Activated CD4-positive, alpha-beta T cell treated with anti-CD3 and anti-CD28 coated beads, Interleukin-2, amount 10 ng/mL, durations not matched to agents 24 days and 14 days (primary cell): ENCODE measurements at regions of chr4 and their contacts with region 1.

Region 1: GRCh38 chr4:158253350-158253980 is 43.2 kb downstream of the TMEM144 start:
- DNase-seq: peak; percentile 86
- H3K4me3 Mint-ChIP-seq: no peak overlapping the region
- H3K27ac Mint-ChIP-seq: no peak overlapping the region
- H3K4me1 Mint-ChIP-seq: no peaks in the 10 kb centered on the region
- H3K27me3 Mint-ChIP-seq: peaks cover 2% of the 10 kb centered on the region

Region 2: DNA sequence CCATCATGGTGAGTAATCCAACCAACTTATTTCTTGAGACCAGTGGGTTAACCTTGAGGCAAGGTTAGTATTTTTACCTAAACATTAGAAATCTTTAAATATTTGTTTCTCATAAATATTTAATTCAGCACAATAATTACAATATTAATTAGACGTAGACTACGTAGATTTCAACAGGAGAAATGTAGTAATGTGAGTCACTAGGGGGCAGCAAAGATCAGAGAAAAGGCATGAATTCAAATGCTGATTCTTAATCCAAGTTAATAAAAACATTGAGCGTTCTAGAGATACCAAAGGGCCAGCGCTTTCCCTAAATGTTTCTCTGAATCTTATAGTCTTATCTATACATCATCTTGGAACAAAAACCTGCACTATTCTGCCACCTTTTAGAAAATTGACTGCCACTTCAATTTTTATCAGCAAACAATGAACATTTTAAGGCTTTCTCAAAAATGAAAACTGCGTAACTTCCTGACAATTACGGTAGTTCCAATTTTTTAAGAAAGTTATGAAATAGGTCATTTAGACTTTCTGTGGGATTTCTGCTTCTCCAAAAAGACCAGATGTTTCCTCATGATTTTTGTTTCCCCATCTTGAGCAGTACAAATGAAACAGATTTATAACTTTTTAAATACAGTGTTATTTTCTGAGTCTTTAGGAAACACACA is 261.3 kb before region 1 on chr4:
- intact Hi-C with region 1: loop called (anchors 2 kb)
- DNase-seq: peak; percentile 70
- H3K4me3 Mint-ChIP-seq: no peak overlapping the region
- H3K27ac Mint-ChIP-seq: no peak overlapping the region
- H3K4me1 Mint-ChIP-seq: no peaks in the 10 kb centered on the region
- H3K27me3 Mint-ChIP-seq: no peaks in the 10 kb centered on the region

Region 3: DNA sequence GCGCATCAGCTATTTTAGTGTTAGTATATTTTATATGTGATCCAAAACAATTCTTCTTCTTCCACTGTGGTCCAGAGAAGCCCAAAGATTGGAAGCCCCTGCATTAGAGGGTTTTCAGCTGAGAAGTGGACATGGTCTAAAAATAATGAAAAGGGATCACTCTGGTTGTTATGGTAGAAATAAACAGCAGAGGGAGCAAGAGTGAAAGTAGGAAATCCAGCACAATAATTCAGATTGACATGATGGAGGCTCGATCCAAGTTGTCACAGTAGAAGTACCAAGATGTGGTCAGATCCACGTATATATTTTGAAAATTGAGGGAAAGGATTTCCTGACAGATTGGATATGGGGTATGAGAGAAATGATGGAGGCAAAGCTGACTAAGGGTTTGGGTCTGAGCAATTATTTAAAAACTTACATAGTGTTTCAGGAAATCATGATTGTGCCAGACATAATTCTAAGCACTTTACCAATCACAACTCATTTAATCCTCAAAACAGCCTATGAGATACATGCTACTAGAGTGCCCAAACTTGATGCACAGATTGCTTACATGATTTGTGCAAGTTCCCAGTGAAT is 60.2 kb before region 1 on chr4:
- intact Hi-C with region 1: loop called (anchors 5 kb)
- DNase-seq: peak; percentile 52
- H3K4me3 Mint-ChIP-seq: no peak overlapping the region
- H3K27ac Mint-ChIP-seq: no peak overlapping the region
- H3K4me1 Mint-ChIP-seq: peaks cover 2% of the 10 kb centered on the region
- H3K27me3 Mint-ChIP-seq: peaks cover 6% of the 10 kb centered on the region

Region 4: DNA sequence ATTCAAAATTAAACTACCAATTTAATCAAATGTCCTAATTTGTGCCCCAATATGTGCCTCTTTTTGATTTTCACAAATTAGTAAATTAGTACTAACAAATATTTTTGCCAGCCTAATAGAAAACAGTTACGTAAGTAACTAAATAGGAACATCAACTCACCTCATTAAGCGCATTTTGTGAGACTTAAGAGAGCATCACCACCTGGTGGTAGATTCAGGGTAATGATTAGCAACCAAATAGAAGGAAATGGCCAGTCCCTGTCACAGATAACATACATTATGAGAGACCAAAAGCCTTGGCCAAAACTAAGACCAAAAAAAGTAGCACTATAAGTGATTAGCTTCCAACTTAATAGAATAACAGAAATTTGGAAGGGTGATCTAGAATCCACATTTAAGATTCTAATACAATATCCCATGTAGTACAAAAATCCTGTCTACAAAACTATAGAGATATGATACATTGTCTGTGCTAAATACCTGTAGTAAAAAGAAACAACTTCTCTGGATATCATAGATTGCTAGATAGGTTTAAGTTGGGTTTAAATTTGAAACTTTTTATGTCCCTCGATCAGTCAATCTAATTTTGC is 371.5 kb after region 1 on chr4:
- intact Hi-C with region 1: loop called (anchors 2 kb)
- DNase-seq: no peak
- H3K4me3 Mint-ChIP-seq: no peak overlapping the region
- H3K27ac Mint-ChIP-seq: no peak overlapping the region
- H3K4me1 Mint-ChIP-seq: no peaks in the 10 kb centered on the region
- H3K27me3 Mint-ChIP-seq: peaks cover 18% of the 10 kb centered on the region

Region 5: GRCh38 chr4:158722917-158723793 is 469.7 kb after region 1 on chr4 and contains the start of gene PPID:
- intact Hi-C with region 1: loop called (anchors 10 kb)
- DNase-seq: peak; percentile 96
- H3K4me3 Mint-ChIP-seq: peak within 1 kb of the TSS; percentile 95
- H3K27ac Mint-ChIP-seq: peak within 1 kb of the TSS; percentile 99
- H3K4me1 Mint-ChIP-seq: peaks cover 45% of the 10 kb centered on the region
- H3K27me3 Mint-ChIP-seq: no peaks in the 10 kb centered on the region
- total RNA-seq, gene PPID: 62.9 and 64.7 TPM in 2 replicates

Region 6: GRCh38 chr4:158850800-158851644 is 597.6 kb after region 1 on chr4:
- intact Hi-C with region 1: loop called (anchors 5 kb)
- DNase-seq: no peak
- H3K4me3 Mint-ChIP-seq: no peak overlapping the region
- H3K27ac Mint-ChIP-seq: no peak overlapping the region
- H3K4me1 Mint-ChIP-seq: peaks cover 17% of the 10 kb centered on the region
- H3K27me3 Mint-ChIP-seq: no peaks in the 10 kb centered on the region

Region 7: DNA sequence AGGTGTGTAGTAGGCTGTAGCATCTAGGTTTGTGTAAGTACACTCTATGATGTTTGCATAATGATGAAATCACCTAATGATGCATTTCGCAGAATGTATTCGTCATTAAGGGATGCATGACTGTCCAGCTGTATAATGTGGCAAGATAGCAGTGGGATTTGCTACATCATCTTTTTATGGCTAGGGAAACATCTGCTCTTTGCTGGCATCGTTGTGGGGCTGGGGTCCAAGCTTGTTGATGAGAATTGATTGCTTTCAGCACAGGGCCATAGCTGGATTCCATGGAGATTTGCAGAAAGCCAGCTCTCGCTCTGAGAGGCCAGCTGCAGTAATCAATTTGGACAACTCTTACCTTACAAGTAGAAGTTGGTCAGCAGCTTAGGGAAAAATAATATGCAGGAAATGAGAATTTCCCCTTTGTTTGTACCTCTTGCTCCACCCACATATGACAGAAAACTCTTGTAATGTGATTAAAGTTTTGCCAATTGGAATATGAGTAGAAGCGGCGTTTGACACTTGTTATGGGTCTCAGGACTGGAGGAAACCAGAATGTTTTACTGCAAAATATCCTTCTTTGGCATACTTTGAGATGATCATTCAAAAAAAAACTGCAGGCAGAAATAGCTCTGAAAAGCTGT is 1160.0 kb after region 1 on chr4:
- intact Hi-C with region 1: no loop called
- DNase-seq: no peak
- H3K4me3 Mint-ChIP-seq: no peak overlapping the region
- H3K27ac Mint-ChIP-seq: no peak overlapping the region
- H3K4me1 Mint-ChIP-seq: no peaks in the 10 kb centered on the region
- H3K27me3 Mint-ChIP-seq: peaks cover 5% of the 10 kb centered on the region

Region 8: GRCh38 chr4:159446266-159446976 is 1193.0 kb after region 1 on chr4:
- intact Hi-C with region 1: loop called (anchors 2 kb)
- DNase-seq: peak; percentile 75
- H3K4me3 Mint-ChIP-seq: no peak overlapping the region
- H3K27ac Mint-ChIP-seq: no peak overlapping the region
- H3K4me1 Mint-ChIP-seq: no peaks in the 10 kb centered on the region
- H3K27me3 Mint-ChIP-seq: peaks cover 5% of the 10 kb centered on the region